Prostate gland (tissue), 2 donors: ENCODE measurements at regions of chr7 and their contacts with region 1.

Region 1: GRCh38 chr7:101138213-101138870 is 11.4 kb downstream of the SERPINE1 start:
- DNase-seq: peak; percentile 43
- H3K4me3 ChIP-seq: no peak overlapping the region
- H3K27ac ChIP-seq: no peak overlapping the region
- H3K4me1 ChIP-seq: no peaks in the 10 kb centered on the region
- H3K27me3 ChIP-seq: no peaks in the 10 kb centered on the region
- CTCF ChIP-seq: peak; percentile 62 to 66 (median 64)
- POLR2A ChIP-seq: no peak

Region 2: DNA sequence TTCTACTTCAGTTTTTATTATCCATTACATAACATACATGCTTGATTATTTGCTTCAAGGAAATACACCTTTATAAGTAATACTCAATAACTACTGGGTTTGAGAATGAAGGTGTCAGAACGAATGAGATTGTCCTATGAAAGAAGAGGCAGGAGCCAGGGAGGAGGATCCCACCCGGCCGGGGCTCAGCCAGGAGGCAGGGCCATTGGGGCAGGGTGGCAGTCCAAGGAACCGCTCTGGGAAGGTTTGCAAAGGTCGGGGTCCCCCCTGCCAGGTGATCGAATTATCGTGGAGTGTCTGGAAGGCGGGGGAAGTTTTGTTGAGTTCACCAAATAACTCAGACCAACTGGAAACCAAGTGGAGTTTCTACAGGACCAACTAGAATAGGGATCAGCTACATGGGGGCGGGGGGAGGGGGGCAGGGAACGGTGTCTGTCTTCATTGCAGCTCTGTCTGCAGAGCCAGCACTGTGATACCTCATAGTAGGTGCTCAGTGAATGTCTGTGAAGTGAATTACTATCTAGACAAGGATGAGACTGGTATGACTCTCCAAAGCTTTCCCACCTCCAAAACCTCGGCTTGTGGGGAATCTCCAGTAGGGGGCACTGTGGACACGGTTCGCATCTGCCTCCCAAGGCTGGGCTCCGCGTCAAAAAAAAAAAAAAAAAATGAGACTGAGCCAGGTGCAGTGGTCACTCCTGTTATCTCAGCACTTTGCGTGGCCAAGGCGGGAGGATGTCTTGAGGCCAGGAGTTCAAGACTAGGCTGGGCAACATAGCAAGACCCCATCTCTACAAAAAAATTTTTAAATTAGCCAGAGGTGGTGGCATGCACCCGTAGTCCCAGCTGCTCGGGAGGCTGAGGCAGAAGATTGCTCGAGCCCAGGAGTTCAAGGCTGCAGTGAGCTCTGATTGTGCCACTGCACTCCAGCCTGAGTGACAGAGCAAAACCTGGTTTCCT is 43.6 kb before region 1 on chr7:
- intact Hi-C with region 1: loop called (anchors 2 kb)
- DNase-seq: no peak
- H3K4me3 ChIP-seq: no peak overlapping the region
- H3K27ac ChIP-seq: no peak overlapping the region
- H3K4me1 ChIP-seq: no peaks in the 10 kb centered on the region
- H3K27me3 ChIP-seq: no peaks in the 10 kb centered on the region
- CTCF ChIP-seq: peak in 3 of 4 experiments; percentile 28 to 45 (median 35)
- POLR2A ChIP-seq: no peak

Region 3: GRCh38 chr7:101287032-101287431 is 148.7 kb after region 1 on chr7:
- intact Hi-C with region 1: loop called (anchors 5 kb)
- DNase-seq: no peak
- H3K4me3 ChIP-seq: no peak overlapping the region
- H3K27ac ChIP-seq: no peak overlapping the region
- H3K4me1 ChIP-seq: no peaks in the 10 kb centered on the region
- H3K27me3 ChIP-seq: no peaks in the 10 kb centered on the region
- CTCF ChIP-seq: no peak
- POLR2A ChIP-seq: no peak

Region 4: GRCh38 chr7:101333912-101334311 is 195.6 kb after region 1 on chr7:
- intact Hi-C with region 1: no loop called
- DNase-seq: no peak
- H3K4me3 ChIP-seq: no peak overlapping the region
- H3K27ac ChIP-seq: no peak overlapping the region
- H3K4me1 ChIP-seq: no peaks in the 10 kb centered on the region
- H3K27me3 ChIP-seq: no peaks in the 10 kb centered on the region
- CTCF ChIP-seq: no peak
- POLR2A ChIP-seq: no peak

Region 5: GRCh38 chr7:101390901-101391301 is 252.6 kb after region 1 on chr7:
- intact Hi-C with region 1: no loop called
- DNase-seq: no peak
- H3K4me3 ChIP-seq: no peak overlapping the region
- H3K27ac ChIP-seq: no peak overlapping the region
- H3K4me1 ChIP-seq: no peaks in the 10 kb centered on the region
- H3K27me3 ChIP-seq: no peaks in the 10 kb centered on the region
- CTCF ChIP-seq: no peak
- POLR2A ChIP-seq: no peak